HEK293 (cell line): ENCODE measurements at regions of chr14 and their contacts with region 1.

Region 1: DNA sequence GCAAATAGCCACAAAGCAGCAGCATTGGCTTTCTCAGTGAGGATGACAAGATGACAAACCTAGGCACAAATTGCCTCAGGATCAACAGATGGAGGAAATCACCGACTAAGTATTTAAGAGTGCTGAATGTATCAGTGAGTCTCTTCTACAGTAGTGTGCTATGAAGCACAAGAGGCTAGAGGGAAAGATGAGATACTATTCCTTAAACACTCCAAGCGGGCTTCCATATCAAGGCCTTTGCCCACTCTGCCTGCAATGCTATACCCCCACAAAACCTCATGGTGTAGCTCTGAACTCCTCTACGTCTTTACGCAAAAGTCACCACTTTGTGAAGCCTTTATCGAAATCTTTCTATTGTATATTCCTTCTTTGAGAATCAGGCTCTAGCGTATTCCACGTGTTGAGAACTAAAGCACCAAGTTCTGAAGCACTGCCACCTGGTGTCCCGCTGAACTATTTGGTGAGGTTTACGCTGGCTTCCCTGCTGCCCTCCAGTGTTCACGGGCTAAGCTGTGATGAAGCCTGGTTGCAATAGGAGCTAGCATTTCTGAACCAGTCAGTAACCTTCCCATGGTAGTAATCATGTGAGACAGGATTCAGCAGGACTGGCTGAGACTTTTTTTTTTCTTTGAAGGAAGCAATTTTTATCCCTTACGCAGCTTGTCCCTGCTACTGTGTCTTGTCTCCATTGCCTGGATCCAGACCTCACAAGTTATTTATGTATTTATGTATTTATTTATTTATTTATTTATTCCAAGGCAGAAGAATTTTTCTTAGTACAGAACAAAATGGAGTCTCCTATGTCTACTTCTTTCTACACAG is 426.5 kb upstream of the OR4E1 start:
- H3K4me3 ChIP-seq: no peak overlapping the region
- H3K27ac ChIP-seq: no peak overlapping the region
- H3K4me1 ChIP-seq: no peaks in the 10 kb centered on the region
- CTCF ChIP-seq: peak; percentile 73

Region 2: DNA sequence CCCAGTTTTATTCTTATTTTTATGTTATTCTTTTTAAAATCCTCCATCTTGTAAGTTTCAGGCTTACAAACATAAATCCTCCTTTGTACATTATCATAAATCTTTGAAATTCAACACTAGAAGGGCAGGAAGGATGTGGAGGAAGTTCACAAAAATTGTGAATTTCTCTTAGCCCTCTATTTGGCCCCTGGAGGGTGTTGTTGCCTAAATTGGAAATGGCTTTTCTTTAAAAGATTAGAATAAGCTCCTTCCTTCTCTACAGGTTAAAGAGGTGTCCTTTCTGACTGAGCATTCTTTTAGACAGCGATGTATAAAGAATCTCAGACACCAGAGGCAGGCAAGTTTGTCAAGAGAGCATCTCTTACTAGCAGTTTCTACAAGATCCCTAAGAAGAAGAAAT is 34.8 kb before region 1 on chr14:
- CTCF ChIA-PET with region 1: interaction called, 11 read pairs
- POLR2A ChIA-PET with region 1: no interaction called
- H3K4me3 ChIP-seq: no peak overlapping the region
- H3K27ac ChIP-seq: no peak overlapping the region
- H3K4me1 ChIP-seq: no peaks in the 10 kb centered on the region
- CTCF ChIP-seq: no peak

Region 3: DNA sequence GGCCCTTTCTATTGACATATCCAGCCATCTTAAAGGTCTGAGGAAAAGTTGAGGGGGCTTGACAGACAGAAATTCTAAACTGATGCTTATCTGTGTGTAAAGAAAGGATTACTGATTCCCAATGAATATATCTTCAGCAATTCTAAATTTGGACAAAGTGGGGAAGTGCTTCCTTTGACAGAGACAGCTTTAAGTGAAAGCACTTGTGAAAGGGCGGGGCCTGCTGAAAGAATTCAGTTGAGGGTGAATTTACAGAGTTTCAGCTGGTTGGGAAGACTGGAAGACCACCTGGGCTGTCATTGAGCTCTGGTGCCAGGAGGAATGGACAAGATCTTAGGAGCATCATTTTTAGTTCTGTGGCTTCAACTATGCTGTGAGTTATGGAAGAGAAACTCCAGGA is 14.0 kb before region 1 on chr14:
- CTCF ChIA-PET with region 1: interaction called, 10 read pairs
- POLR2A ChIA-PET with region 1: no interaction called
- H3K4me3 ChIP-seq: no peak overlapping the region
- H3K27ac ChIP-seq: no peak overlapping the region
- H3K4me1 ChIP-seq: no peaks in the 10 kb centered on the region
- CTCF ChIP-seq: no peak